ENCODE measurements at regions of chr16 and their contacts with region 1.

Region 1: GRCh38 chr16:79601931-79602627 is 1.5 kb upstream of the MAF start:
- DNase-seq: peak; percentile 85 to 89 (median 85)
- H3K4me3 ChIP-seq: peak overlapping the region; percentile 57 to 90
- H3K4me3 Mint-ChIP-seq: peak overlapping the region; percentile 95 to 99 (median 98)
- H3K27ac ChIP-seq: peak overlapping the region; percentile 65
- H3K27ac Mint-ChIP-seq: peak overlapping the region; percentile 73 to 99 (median 96)
- H3K4me1 ChIP-seq: peaks cover 27% of the 10 kb centered on the region
- H3K4me1 Mint-ChIP-seq: peaks cover 18 to 54% (median 32%) of the 10 kb centered on the region in 4 donors
- H3K27me3 ChIP-seq: no peaks in the 10 kb centered on the region
- H3K27me3 Mint-ChIP-seq: no peaks in the 10 kb centered on the region

Region 2: GRCh38 chr16:78478267-78478861 is 1123.7 kb before region 1 on chr16:
- CTCF ChIA-PET with region 1: no interaction called
- POLR2A ChIA-PET with region 1: no interaction called
- intact Hi-C with region 1: loop called (anchors 1 kb)
- DNase-seq: peak in 4 of 5 donors; percentile 2 to 9 (median 5)
- H3K4me3 ChIP-seq: no peak overlapping the region
- H3K4me3 Mint-ChIP-seq: no peak overlapping the region
- H3K27ac ChIP-seq: no peak overlapping the region
- H3K27ac Mint-ChIP-seq: no peak overlapping the region
- H3K4me1 ChIP-seq: no peaks in the 10 kb centered on the region
- H3K4me1 Mint-ChIP-seq: peaks cover 0 to 4% (median 0%) of the 10 kb centered on the region in 4 donors
- H3K27me3 ChIP-seq: no peaks in the 10 kb centered on the region
- H3K27me3 Mint-ChIP-seq: no peaks in the 10 kb centered on the region

Region 3: GRCh38 chr16:78770353-78771091 is 831.6 kb before region 1 on chr16:
- CTCF ChIA-PET with region 1: interaction called, 11 read pairs
- POLR2A ChIA-PET with region 1: interaction called, 17 read pairs
- intact Hi-C with region 1: loop called (anchors 1 kb)
- DNase-seq: peak; percentile 73 to 80 (median 77)
- H3K4me3 ChIP-seq: no peak overlapping the region
- H3K4me3 Mint-ChIP-seq: peak overlapping the region in 3 of 8 donors; percentile 4 to 48 (median 33)
- H3K27ac ChIP-seq: no peak overlapping the region
- H3K27ac Mint-ChIP-seq: peak overlapping the region; percentile 5 to 83 (median 31)
- H3K4me1 ChIP-seq: peaks cover 24% of the 10 kb centered on the region
- H3K4me1 Mint-ChIP-seq: peaks cover 17 to 30% (median 21%) of the 10 kb centered on the region in 4 donors
- H3K27me3 ChIP-seq: no peaks in the 10 kb centered on the region
- H3K27me3 Mint-ChIP-seq: peaks cover 0 to 2% of the 10 kb centered on the region in 2 donors

Region 4: DNA sequence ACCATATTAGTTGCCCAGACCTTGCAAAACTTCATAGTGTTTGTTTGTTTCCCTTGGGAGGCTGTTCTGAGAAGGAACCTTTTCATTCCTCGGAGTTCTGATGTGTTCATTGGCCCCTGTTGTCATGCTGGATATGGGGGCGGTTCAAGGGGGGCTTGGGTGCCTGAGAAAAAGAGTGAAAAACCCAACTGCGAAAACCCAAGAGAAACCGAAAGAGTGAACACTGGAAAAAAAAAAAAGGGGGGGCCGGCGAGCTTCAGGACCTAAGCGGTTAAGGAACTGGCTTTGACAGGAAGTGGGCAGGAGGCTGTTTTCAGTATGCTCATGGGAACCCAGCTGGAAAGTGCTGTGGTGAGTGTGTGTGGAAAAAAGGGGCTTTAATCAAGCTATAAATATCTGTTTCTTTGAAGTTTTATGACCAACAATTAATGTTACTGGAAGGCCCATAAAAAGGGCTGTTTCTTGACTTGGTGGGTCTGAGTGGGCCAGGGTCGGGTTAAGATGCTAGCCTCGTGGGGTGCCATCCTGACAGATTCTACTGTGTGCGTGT is 512.3 kb before region 1 on chr16:
- CTCF ChIA-PET with region 1: interaction called, 4 read pairs
- POLR2A ChIA-PET with region 1: interaction called, 13 read pairs
- intact Hi-C with region 1: loop called (anchors 5 kb)
- DNase-seq: peak; percentile 52 to 67 (median 60)
- H3K4me3 ChIP-seq: peak overlapping the region in 1 of 2 donors; percentile 45
- H3K4me3 Mint-ChIP-seq: peak overlapping the region; percentile 77 to 92 (median 84)
- H3K27ac ChIP-seq: no peak overlapping the region
- H3K27ac Mint-ChIP-seq: peak overlapping the region; percentile 65 to 91 (median 80)
- H3K4me1 ChIP-seq: peaks cover 55% of the 10 kb centered on the region
- H3K4me1 Mint-ChIP-seq: peaks cover 28 to 60% (median 42%) of the 10 kb centered on the region in 4 donors
- H3K27me3 ChIP-seq: no peaks in the 10 kb centered on the region
- H3K27me3 Mint-ChIP-seq: no peaks in the 10 kb centered on the region

Region 5: DNA sequence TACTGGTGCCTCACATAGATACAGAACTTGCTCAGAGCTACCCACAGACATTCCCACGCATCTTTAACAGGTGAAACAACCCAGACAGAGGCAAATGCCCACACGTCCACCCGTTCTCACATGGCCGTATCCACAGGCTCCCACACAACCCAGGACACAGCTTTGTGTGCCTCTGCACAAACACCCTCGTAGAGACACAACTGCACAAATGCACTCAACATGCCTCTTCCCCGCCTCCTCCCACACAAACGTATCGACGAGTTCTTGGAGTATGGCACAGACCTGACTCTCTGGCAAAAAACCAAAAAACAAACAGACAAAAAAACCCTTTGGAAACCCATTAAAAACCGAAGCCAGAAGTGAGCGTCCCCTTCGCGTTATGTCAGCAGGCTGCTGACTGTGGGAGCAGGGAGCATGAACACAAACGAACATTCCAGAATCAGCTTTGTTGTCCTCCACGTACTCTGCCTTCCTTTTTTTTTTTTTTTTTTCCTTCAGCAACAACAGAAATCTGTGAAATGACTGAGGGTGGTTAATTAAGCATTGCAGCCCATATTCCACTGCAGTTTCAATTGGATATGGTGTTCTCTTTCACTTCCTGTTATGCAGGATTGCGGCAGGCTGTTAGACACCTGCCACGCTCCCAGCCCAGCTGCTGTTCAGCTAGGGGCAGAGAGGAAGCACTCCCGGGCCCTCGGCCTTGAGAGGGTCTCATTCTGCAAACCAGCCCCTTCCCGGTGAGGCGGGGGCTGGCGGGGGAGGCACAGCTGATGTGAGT is 315.2 kb before region 1 on chr16:
- CTCF ChIA-PET with region 1: interaction called, 9 read pairs
- POLR2A ChIA-PET with region 1: interaction called, 104 read pairs
- intact Hi-C with region 1: no loop called
- DNase-seq: peak in 4 of 5 donors; percentile 36 to 48 (median 40)
- H3K4me3 ChIP-seq: peak overlapping the region; percentile 6 to 59
- H3K4me3 Mint-ChIP-seq: peak overlapping the region; percentile 73 to 93 (median 86)
- H3K27ac ChIP-seq: peak overlapping the region; percentile 23
- H3K27ac Mint-ChIP-seq: peak overlapping the region; percentile 79 to 92 (median 88)
- H3K4me1 ChIP-seq: peaks cover 62% of the 10 kb centered on the region
- H3K4me1 Mint-ChIP-seq: peaks cover 44 to 68% (median 59%) of the 10 kb centered on the region in 4 donors
- H3K27me3 ChIP-seq: no peaks in the 10 kb centered on the region
- H3K27me3 Mint-ChIP-seq: no peaks in the 10 kb centered on the region

Region 6: GRCh38 chr16:79535130-79535529 is 66.9 kb before region 1 on chr16:
- CTCF ChIA-PET with region 1: no interaction called
- POLR2A ChIA-PET with region 1: no interaction called
- intact Hi-C with region 1: no loop called
- DNase-seq: no peak
- H3K4me3 ChIP-seq: no peak overlapping the region
- H3K4me3 Mint-ChIP-seq: no peak overlapping the region
- H3K27ac ChIP-seq: no peak overlapping the region
- H3K27ac Mint-ChIP-seq: no peak overlapping the region
- H3K4me1 ChIP-seq: no peaks in the 10 kb centered on the region
- H3K4me1 Mint-ChIP-seq: no peaks in the 10 kb centered on the region
- H3K27me3 ChIP-seq: no peaks in the 10 kb centered on the region
- H3K27me3 Mint-ChIP-seq: no peaks in the 10 kb centered on the region

Region 7: DNA sequence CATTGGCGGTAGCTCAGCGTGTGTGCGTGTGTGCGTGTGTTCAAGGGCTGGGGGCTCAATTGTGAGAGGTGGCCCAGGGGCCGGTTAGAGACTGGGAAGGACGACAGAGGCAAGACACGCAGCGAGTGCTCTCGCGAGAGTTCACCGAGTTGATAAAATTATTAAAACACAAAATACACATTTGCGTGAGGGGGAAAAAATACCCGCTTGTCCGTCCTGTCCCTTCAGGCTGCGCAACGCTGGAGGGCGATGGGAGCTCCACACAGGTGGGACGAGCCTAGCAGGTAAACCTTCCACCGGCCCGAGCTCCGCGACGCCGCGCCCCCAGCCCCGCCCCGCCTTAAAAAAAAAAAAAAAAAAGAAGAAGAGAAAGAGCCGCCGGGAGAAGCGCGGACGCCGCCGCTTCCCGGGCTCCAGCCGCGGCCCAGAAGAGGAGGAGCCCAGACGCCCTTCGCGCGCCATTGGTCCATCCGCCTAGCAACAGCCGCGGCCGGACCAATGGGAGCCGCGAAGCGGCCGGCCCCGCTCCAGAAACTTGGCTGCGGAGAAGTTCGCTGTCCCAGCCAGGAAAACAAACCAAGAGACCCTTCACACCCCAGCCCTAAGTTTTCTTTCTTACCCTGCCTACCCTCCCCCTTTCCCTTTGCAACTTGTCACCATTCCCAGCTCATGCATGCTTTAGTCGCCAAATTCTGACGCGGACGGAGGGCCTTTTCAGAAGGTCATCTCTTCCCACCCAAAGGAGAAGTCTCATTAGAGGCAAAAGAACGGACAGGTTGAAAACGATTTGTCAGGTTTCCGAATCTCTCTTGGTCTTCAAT is 168.4 kb after region 1 on chr16:
- CTCF ChIA-PET with region 1: interaction called, 8 read pairs
- POLR2A ChIA-PET with region 1: interaction called, 21 read pairs
- intact Hi-C with region 1: loop called (anchors 5 kb)
- DNase-seq: peak; percentile 50 to 70 (median 65)
- H3K4me3 ChIP-seq: peak overlapping the region; percentile 66 to 77
- H3K4me3 Mint-ChIP-seq: peak overlapping the region; percentile 88 to 96 (median 94)
- H3K27ac ChIP-seq: peak overlapping the region; percentile 27
- H3K27ac Mint-ChIP-seq: peak overlapping the region; percentile 85 to 92 (median 89)
- H3K4me1 ChIP-seq: peaks cover 18% of the 10 kb centered on the region
- H3K4me1 Mint-ChIP-seq: peaks cover 14 to 33% (median 19%) of the 10 kb centered on the region in 4 donors
- H3K27me3 ChIP-seq: no peaks in the 10 kb centered on the region
- H3K27me3 Mint-ChIP-seq: no peaks in the 10 kb centered on the region

Region 8: DNA sequence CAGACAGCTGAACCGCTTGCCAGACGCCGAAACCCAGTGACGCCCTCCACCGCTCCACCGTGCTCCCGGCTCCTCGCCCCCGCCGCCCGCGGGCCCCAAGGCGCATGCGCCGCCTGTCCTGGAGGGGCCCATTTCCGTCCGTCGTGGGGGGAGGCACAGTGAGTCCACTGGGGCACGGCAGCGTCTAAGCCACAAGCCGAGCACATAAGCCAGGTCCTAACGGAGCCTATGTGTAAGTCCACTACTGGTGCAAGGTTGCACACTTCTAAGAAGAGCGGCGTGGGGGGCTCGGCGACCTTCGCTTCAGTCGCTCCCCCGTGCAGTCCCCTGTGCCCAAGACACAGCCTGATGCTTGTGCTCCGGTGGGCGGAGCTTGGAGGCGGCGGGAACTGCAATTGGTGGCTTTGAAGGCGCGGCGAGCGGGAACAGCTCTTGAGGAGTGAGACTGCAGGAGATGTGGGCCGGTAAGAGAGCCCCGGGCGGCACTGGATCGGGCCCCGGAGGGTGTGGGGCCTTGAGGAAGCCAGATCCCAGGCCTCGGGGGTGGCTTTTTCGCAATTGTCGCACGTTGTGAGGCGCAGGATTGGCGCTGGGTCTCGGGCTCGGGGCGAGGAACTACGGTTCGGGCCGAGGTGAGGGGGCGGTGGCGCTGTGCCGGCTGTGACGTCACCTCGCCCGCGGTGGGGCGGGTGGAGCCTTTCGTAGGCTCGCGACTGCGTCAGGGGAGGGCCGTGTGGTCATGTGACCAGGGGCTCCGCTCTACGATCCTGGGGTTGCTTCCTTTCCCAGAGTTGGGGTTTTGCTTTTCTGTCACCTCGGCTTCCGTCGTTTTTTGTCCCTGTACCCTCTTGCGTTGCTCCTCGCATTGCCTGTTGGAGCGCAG is 1405.0 kb after region 1 on chr16 and contains the starts of genes CENPN and CMC2:
- CTCF ChIA-PET with region 1: no interaction called
- POLR2A ChIA-PET with region 1: interaction called, 3 read pairs
- intact Hi-C with region 1: loop called (anchors 2 kb)
- DNase-seq: peak; percentile 99 to 100 (median 99)
- H3K4me3 ChIP-seq: peak within 1 kb of the TSS; percentile 85 to 86
- H3K4me3 Mint-ChIP-seq: peak within 1 kb of the TSS; percentile 93 to 99 (median 94)
- H3K27ac ChIP-seq: peak within 1 kb of the TSS; percentile 95
- H3K27ac Mint-ChIP-seq: peak within 1 kb of the TSS; percentile 97 to 100 (median 100)
- H3K4me1 ChIP-seq: peaks cover 47% of the 10 kb centered on the region
- H3K4me1 Mint-ChIP-seq: peaks cover 28 to 51% (median 40%) of the 10 kb centered on the region in 4 donors
- H3K27me3 ChIP-seq: no peaks in the 10 kb centered on the region
- H3K27me3 Mint-ChIP-seq: no peaks in the 10 kb centered on the region
- total RNA-seq, gene CENPN: 3.4 to 4.0 TPM
- total RNA-seq, gene CMC2: 39.7 to 39.9 TPM